ENCODE measurements at regions of chr16 and their contacts with region 1.

Region 1: GRCh38 chr16:67672739-67673662 is 6.4 kb downstream of the C16orf86 start:
- DNase-seq: peak; percentile 14
- H3K4me3 ChIP-seq: no peak overlapping the region
- CTCF ChIP-seq: peak; percentile 72

Region 2: DNA sequence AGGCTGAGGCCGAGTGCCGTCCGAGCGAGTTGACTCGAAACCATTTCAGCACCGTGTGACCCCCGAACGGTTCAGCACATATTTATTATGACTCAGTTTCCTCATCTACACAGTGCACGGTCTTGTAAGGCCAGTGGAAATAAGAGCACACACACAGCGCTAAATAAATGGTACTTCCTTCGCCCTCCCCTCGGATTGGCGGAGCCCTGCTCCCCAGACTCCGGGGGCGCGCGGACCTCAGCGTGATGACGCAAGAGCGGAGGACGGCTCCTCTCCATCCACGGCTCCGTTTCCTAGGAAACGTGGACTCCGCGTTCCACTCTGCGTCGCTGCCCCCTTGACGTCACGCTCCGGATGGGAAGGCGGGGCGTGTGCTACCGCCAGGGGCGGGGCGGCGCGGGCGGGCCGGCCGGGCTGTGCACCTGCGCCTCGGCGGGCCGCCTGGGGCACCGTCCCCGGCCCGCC is 12.4 kb before region 1 on chr16 and contains the start of gene PARD6A:
- CTCF ChIA-PET with region 1: interaction called, 87 read pairs
- POLR2A ChIA-PET with region 1: interaction called, 4 read pairs
- DNase-seq: peak; percentile 53
- H3K4me3 ChIP-seq: peak within 1 kb of the TSS; percentile 94
- CTCF ChIP-seq: no peak

Region 3: GRCh38 chr16:67865316-67865715 is 192.3 kb after region 1 on chr16:
- CTCF ChIA-PET with region 1: interaction called, 12 read pairs
- POLR2A ChIA-PET with region 1: no interaction called
- DNase-seq: no peak
- H3K4me3 ChIP-seq: no peak overlapping the region
- CTCF ChIP-seq: peak; percentile 49

Region 4: GRCh38 chr16:67928561-67929364 is 255.8 kb after region 1 on chr16:
- CTCF ChIA-PET with region 1: interaction called, 15 read pairs
- POLR2A ChIA-PET with region 1: no interaction called
- DNase-seq: no peak
- H3K4me3 ChIP-seq: no peak overlapping the region
- CTCF ChIP-seq: peak; percentile 94

Measured in AG04449 (cell line).